T-cell (primary cell): ENCODE measurements at regions of chr16 and their contacts with region 1.

Region 1: GRCh38 chr16:29913514-29913913 is 12.5 kb downstream of the KCTD13 start:
- DNase-seq: no peak
- ATAC-seq: no peak
- H3K4me3 ChIP-seq: no peak overlapping the region
- H3K4me3 Mint-ChIP-seq: no peak overlapping the region
- H3K27ac ChIP-seq: no peak overlapping the region
- H3K27ac Mint-ChIP-seq: no peak overlapping the region
- H3K4me1 ChIP-seq: no peaks in the 10 kb centered on the region
- H3K4me1 Mint-ChIP-seq: peaks cover 0 to 3% (median 0%) of the 10 kb centered on the region in 3 donors
- H3K27me3 ChIP-seq: no peaks in the 10 kb centered on the region
- H3K27me3 Mint-ChIP-seq: no peaks in the 10 kb centered on the region

Region 2: DNA sequence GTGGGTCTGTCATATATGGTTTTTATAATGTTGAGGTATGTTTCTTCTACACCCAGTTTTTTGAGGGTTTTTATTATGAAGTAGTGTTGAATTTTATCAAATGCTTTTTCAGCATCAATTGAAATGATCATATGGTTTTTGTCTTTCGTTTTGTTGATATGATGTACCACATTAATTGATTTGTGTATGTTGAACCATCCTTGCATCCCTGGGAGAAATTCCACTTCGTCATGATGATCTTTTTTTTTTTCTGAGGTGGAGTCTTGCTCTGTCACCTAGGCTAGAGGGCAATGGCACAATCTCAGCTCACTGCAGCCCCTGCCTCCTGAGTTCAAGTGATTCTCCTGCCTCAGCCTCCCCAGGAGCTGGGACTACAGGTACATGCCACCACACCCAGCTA is 34.4 kb after region 1 on chr16:
- CTCF ChIA-PET with region 1: interaction called in 1 of 2 experiments, 11 read pairs
- POLR2A ChIA-PET with region 1: no interaction called
- DNase-seq: no peak
- ATAC-seq: no peak
- H3K4me3 ChIP-seq: no peak overlapping the region
- H3K4me3 Mint-ChIP-seq: no peak overlapping the region
- H3K27ac ChIP-seq: no peak overlapping the region
- H3K27ac Mint-ChIP-seq: no peak overlapping the region
- H3K4me1 ChIP-seq: no peaks in the 10 kb centered on the region
- H3K4me1 Mint-ChIP-seq: peaks cover 0 to 9% (median 3%) of the 10 kb centered on the region in 3 donors
- H3K27me3 ChIP-seq: peaks cover 0 to 11% of the 10 kb centered on the region in 2 experiments
- H3K27me3 Mint-ChIP-seq: no peaks in the 10 kb centered on the region